WTC11 (cell line): ENCODE measurements at regions of chr2 and their contacts with region 1.

Region 1: GRCh38 chr2:84925724-84926376 is 20.4 kb downstream of the TMSB10 start:
- DNase-seq: peak; percentile 99
- ATAC-seq: peak; percentile 86
- H3K4me3 Mint-ChIP-seq: peak overlapping the region; percentile 69
- H3K27ac Mint-ChIP-seq: no peak overlapping the region
- H3K4me1 Mint-ChIP-seq: peaks cover 23% of the 10 kb centered on the region
- H3K27me3 Mint-ChIP-seq: peaks cover 12% of the 10 kb centered on the region
- CTCF ChIP-seq: peak; percentile 99

Region 2: DNA sequence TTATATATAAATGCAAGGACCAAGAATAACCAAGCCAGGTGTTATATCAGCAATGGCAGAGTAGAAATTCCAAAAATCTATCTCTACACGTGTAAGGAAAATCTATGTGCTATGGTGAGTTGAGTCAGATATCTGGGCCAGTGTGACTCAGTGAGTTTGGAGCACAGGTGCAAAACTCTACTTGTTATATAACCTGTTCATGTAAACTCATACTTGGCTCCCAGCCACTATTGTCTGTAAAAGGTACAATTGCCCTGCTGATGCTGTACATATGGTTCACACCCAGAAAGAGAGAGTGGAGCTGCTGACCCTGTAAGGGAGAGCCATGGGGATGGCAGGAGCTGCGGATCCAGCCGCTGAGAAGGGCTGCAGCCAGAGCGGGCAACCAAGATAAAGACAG is 157.0 kb before region 1 on chr2:
- CTCF ChIA-PET with region 1: no interaction called
- POLR2A ChIA-PET with region 1: no interaction called
- DNase-seq: no peak
- ATAC-seq: no peak
- H3K4me3 Mint-ChIP-seq: no peak overlapping the region
- H3K27ac Mint-ChIP-seq: no peak overlapping the region
- H3K4me1 Mint-ChIP-seq: no peaks in the 10 kb centered on the region
- H3K27me3 Mint-ChIP-seq: no peaks in the 10 kb centered on the region; the same call in 1 of the 2 replicates
- CTCF ChIP-seq: no peak

Region 3: DNA sequence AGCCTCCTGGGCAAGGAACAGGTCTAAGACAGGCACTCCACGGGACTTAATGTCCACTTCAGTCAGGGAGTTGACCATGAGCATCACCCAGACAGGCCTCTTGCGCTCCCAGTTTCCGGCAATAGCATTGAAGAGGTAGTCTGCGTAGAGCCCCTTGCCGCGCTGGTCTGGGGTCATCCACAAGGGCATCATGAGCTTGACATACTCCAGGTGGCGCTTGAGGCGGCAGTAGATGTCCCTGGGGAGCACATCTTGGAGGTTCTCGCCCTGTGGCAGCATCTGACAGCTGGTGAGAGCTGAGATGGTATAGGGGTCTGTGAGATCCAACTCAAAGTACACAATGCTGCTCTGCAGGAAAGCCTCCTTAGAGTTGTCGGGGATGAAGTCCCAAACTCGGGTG is 55.5 kb before region 1 on chr2:
- CTCF ChIA-PET with region 1: interaction called, 16 read pairs
- POLR2A ChIA-PET with region 1: no interaction called
- DNase-seq: no peak
- ATAC-seq: peak; percentile 81
- H3K4me3 Mint-ChIP-seq: no peak overlapping the region
- H3K27ac Mint-ChIP-seq: no peak overlapping the region
- H3K4me1 Mint-ChIP-seq: no peaks in the 10 kb centered on the region
- H3K27me3 Mint-ChIP-seq: peaks cover 9% of the 10 kb centered on the region
- CTCF ChIP-seq: no peak

Region 4: GRCh38 chr2:84905181-84906107 is 20.4 kb before region 1 on chr2 and contains the start of gene TMSB10:
- CTCF ChIA-PET with region 1: interaction called, 44 read pairs
- POLR2A ChIA-PET with region 1: interaction called, 5 read pairs
- DNase-seq: peak; percentile 65
- ATAC-seq: peak; percentile 38
- H3K4me3 Mint-ChIP-seq: peak within 1 kb of the TSS; percentile 90
- H3K27ac Mint-ChIP-seq: peak within 1 kb of the TSS; percentile 70; the same call in 1 of the 2 replicates
- H3K4me1 Mint-ChIP-seq: peaks cover 25% of the 10 kb centered on the region
- H3K27me3 Mint-ChIP-seq: peaks cover 39% of the 10 kb centered on the region
- CTCF ChIP-seq: no peak
- total RNA-seq, gene TMSB10: 869 to 943 TPM (median 911 TPM) in 3 replicates

Region 5: DNA sequence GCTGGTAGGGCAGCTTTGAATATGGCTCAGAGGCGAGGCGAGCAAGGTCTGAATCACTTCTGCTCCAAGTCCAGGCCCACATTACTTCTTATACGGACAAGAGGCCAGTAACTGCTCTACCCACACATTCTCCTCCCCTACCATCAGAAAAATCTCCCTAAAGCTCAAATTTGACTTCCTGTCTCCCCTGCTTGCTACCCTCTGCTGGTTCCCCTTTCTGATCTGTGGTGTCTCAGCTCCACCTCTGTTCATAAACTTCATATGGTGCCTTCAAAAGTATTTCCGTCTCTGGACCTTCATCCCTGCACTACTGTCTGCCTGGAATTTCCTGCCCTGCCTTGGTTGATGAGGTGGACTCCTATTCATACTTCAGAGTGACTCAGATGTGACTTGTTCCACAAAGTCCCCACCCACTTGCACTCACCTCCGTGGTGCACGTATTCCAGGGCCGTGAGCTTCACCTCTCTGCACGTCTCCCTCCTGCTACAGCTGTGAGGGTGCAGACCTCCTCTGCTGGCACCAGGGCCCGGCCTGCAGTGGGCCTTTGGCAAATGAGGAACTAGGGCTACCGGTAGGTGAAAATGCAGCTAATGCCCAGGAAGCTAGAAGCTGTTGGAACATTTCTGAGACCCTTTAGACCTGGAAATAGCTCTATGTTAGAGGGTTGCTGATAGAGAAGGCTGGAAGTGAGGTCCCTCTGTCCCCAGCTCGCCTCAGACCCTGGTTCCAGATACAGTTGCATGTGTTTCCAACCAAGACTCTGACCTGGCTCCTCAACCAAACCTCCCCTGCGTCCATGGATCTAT is 20.6 kb after region 1 on chr2:
- CTCF ChIA-PET with region 1: interaction called, 43 read pairs
- POLR2A ChIA-PET with region 1: no interaction called
- DNase-seq: no peak
- ATAC-seq: peak; percentile 57
- H3K4me3 Mint-ChIP-seq: no peak overlapping the region; the same call in 1 of the 2 replicates
- H3K27ac Mint-ChIP-seq: no peak overlapping the region
- H3K4me1 Mint-ChIP-seq: peaks cover 12% of the 10 kb centered on the region
- H3K27me3 Mint-ChIP-seq: no peaks in the 10 kb centered on the region; the same call in none of the 2 replicates
- CTCF ChIP-seq: no peak

Region 6: GRCh38 chr2:85011747-85012146 is 85.9 kb after region 1 on chr2:
- CTCF ChIA-PET with region 1: interaction called, 36 read pairs
- POLR2A ChIA-PET with region 1: interaction called, 3 read pairs
- DNase-seq: peak; percentile 33
- ATAC-seq: peak; percentile 86
- H3K4me3 Mint-ChIP-seq: no peak overlapping the region
- H3K27ac Mint-ChIP-seq: no peak overlapping the region
- H3K4me1 Mint-ChIP-seq: peaks cover 69% of the 10 kb centered on the region
- H3K27me3 Mint-ChIP-seq: no peaks in the 10 kb centered on the region
- CTCF ChIP-seq: peak; percentile 53

Region 7: GRCh38 chr2:85053802-85054201 is 128.0 kb after region 1 on chr2:
- CTCF ChIA-PET with region 1: interaction called, 10 read pairs
- POLR2A ChIA-PET with region 1: no interaction called
- DNase-seq: no peak
- ATAC-seq: peak; percentile 9; the same call in 1 of the 2 replicates
- H3K4me3 Mint-ChIP-seq: no peak overlapping the region
- H3K27ac Mint-ChIP-seq: no peak overlapping the region
- H3K4me1 Mint-ChIP-seq: peaks cover 38% of the 10 kb centered on the region
- H3K27me3 Mint-ChIP-seq: no peaks in the 10 kb centered on the region
- CTCF ChIP-seq: no peak